GM12878 (cell line): ENCODE measurements at regions of chr3 and their contacts with region 1.

Region 1: GRCh38 chr3:4633078-4634004 is 140.2 kb downstream of the ITPR1 start:
- DNase-seq: peak; percentile 30
- ATAC-seq: peak; percentile 86
- H3K4me3 ChIP-seq: no peak overlapping the region
- H3K27ac ChIP-seq: no peak overlapping the region
- H3K4me1 ChIP-seq: no peaks in the 10 kb centered on the region
- H3K27me3 ChIP-seq: no peaks in the 10 kb centered on the region
- CTCF ChIP-seq: peak; percentile 75 to 81 (median 77)
- EP300 ChIP-seq: no peak
- POLR2A ChIP-seq: no peak
- RAD21 ChIP-seq: peak; percentile 93

Region 2: GRCh38 chr3:4314688-4315087 is 318.7 kb before region 1 on chr3:
- CTCF ChIA-PET with region 1: interaction called, 12 read pairs
- POLR2A ChIA-PET with region 1: no interaction called
- RAD21 ChIA-PET with region 1: no interaction called
- SMC1A ChIA-PET with region 1: interaction called, 8 read pairs
- in situ Hi-C with region 1: no loop called
- intact Hi-C with region 1: no loop called
- DNase-seq: no peak
- ATAC-seq: peak; percentile 59
- H3K4me3 ChIP-seq: no peak overlapping the region
- H3K27ac ChIP-seq: no peak overlapping the region
- H3K4me1 ChIP-seq: no peaks in the 10 kb centered on the region
- H3K27me3 ChIP-seq: no peaks in the 10 kb centered on the region
- CTCF ChIP-seq: peak in 2 of 3 experiments; percentile 13 to 14; a peak in 2 of 6 replicates
- EP300 ChIP-seq: no peak
- POLR2A ChIP-seq: no peak
- RAD21 ChIP-seq: no peak

Region 3: GRCh38 chr3:4340411-4341335 is 292.7 kb before region 1 on chr3:
- CTCF ChIA-PET with region 1: interaction called, 226 read pairs
- POLR2A ChIA-PET with region 1: no interaction called
- RAD21 ChIA-PET with region 1: interaction called, 5 read pairs
- SMC1A ChIA-PET with region 1: interaction called, 4 read pairs
- in situ Hi-C with region 1: no loop called
- intact Hi-C with region 1: no loop called
- DNase-seq: no peak
- ATAC-seq: no peak
- H3K4me3 ChIP-seq: no peak overlapping the region
- H3K27ac ChIP-seq: no peak overlapping the region
- H3K4me1 ChIP-seq: no peaks in the 10 kb centered on the region
- H3K27me3 ChIP-seq: no peaks in the 10 kb centered on the region
- CTCF ChIP-seq: no peak
- EP300 ChIP-seq: no peak
- POLR2A ChIP-seq: no peak
- RAD21 ChIP-seq: no peak

Region 4: DNA sequence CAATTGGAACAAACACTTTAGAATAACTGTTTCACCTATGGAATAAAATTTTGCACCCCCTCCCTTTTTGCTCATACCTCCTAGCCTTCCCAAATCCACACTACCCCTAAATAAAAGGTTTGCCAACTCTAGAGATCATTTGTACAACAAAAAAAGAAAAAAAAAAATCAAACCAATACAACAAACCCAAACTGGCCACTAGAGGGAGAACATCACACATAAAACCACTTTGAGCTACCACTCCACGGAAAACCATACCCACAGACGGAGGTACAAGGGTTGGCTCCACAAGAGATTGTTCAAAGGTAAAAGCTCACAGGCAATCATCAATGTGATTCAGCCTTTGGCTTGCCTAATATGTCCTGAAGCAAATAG is 282.6 kb before region 1 on chr3:
- CTCF ChIA-PET with region 1: interaction called, 226 read pairs
- POLR2A ChIA-PET with region 1: interaction called, 3 read pairs
- RAD21 ChIA-PET with region 1: interaction called, 105 read pairs
- SMC1A ChIA-PET with region 1: interaction called, 102 read pairs
- in situ Hi-C with region 1: loop called (anchors 5 kb)
- intact Hi-C with region 1: loop called (anchors 1 kb)
- DNase-seq: peak; percentile 31
- ATAC-seq: peak; percentile 96
- H3K4me3 ChIP-seq: no peak overlapping the region
- H3K27ac ChIP-seq: no peak overlapping the region
- H3K4me1 ChIP-seq: no peaks in the 10 kb centered on the region
- H3K27me3 ChIP-seq: no peaks in the 10 kb centered on the region
- CTCF ChIP-seq: peak; percentile 64 to 78 (median 73)
- EP300 ChIP-seq: no peak
- POLR2A ChIP-seq: no peak
- RAD21 ChIP-seq: peak; percentile 95

Region 5: GRCh38 chr3:4517643-4518311 is 115.6 kb before region 1 on chr3:
- CTCF ChIA-PET with region 1: interaction called, 17 read pairs
- POLR2A ChIA-PET with region 1: no interaction called
- RAD21 ChIA-PET with region 1: interaction called, 3 read pairs
- SMC1A ChIA-PET with region 1: interaction called, 11 read pairs
- in situ Hi-C with region 1: no loop called
- intact Hi-C with region 1: no loop called
- DNase-seq: no peak
- ATAC-seq: peak; percentile 68
- H3K4me3 ChIP-seq: no peak overlapping the region
- H3K27ac ChIP-seq: no peak overlapping the region
- H3K4me1 ChIP-seq: peaks cover 8% of the 10 kb centered on the region
- H3K27me3 ChIP-seq: no peaks in the 10 kb centered on the region
- CTCF ChIP-seq: no peak
- EP300 ChIP-seq: no peak
- POLR2A ChIP-seq: no peak
- RAD21 ChIP-seq: no peak

Region 6: GRCh38 chr3:4571690-4572334 is 61.5 kb before region 1 on chr3:
- CTCF ChIA-PET with region 1: interaction called, 14 read pairs
- POLR2A ChIA-PET with region 1: no interaction called
- RAD21 ChIA-PET with region 1: no interaction called
- SMC1A ChIA-PET with region 1: no interaction called
- in situ Hi-C with region 1: no loop called
- intact Hi-C with region 1: no loop called
- DNase-seq: no peak
- ATAC-seq: peak; percentile 77
- H3K4me3 ChIP-seq: no peak overlapping the region
- H3K27ac ChIP-seq: no peak overlapping the region
- H3K4me1 ChIP-seq: no peaks in the 10 kb centered on the region; the same call in 1 of the 2 replicates
- H3K27me3 ChIP-seq: no peaks in the 10 kb centered on the region
- CTCF ChIP-seq: peak; percentile 17 to 33 (median 30); a peak in 3 of 6 replicates
- EP300 ChIP-seq: no peak
- POLR2A ChIP-seq: no peak
- RAD21 ChIP-seq: peak; percentile 55; the same call in 1 of the 2 replicates

Region 7: GRCh38 chr3:4584456-4585249 is 48.7 kb before region 1 on chr3:
- CTCF ChIA-PET with region 1: interaction called, 12 read pairs
- POLR2A ChIA-PET with region 1: no interaction called
- RAD21 ChIA-PET with region 1: interaction called, 4 read pairs
- SMC1A ChIA-PET with region 1: interaction called, 10 read pairs
- in situ Hi-C with region 1: no loop called
- intact Hi-C with region 1: no loop called
- DNase-seq: peak; percentile 13
- ATAC-seq: peak; percentile 56
- H3K4me3 ChIP-seq: peak overlapping the region; percentile 82
- H3K27ac ChIP-seq: peak overlapping the region; percentile 30
- H3K4me1 ChIP-seq: peaks cover 13% of the 10 kb centered on the region
- H3K27me3 ChIP-seq: no peaks in the 10 kb centered on the region
- CTCF ChIP-seq: peak in 1 of 3 experiments; percentile 55; a peak in 2 of 6 replicates
- EP300 ChIP-seq: 0 out of 4 replicates have a peak, but pooled peaks of 1 of the 2 experiments have one; percentile 24
- POLR2A ChIP-seq: no peak
- RAD21 ChIP-seq: peak; percentile 54; the same call in 1 of the 2 replicates